ENCODE measurements at regions of chr2 and their contacts with region 1.

Region 1: GRCh38 chr2:55050133-55050994 is at the start of gene RTN4:
- DNase-seq: peak; percentile 99
- ATAC-seq: peak; percentile 85
- H3K4me3 ChIP-seq: peak within 1 kb of the TSS; percentile 67 to 95 (median 89)
- H3K4me3 Mint-ChIP-seq: peak within 1 kb of the TSS; percentile 100
- H3K27ac ChIP-seq: peak within 1 kb of the TSS; percentile 82 to 89
- H3K27ac Mint-ChIP-seq: peak within 1 kb of the TSS; percentile 100
- H3K4me1 ChIP-seq: peaks cover 48 to 52% of the 10 kb centered on the region in 2 donors
- H3K4me1 Mint-ChIP-seq: peaks cover 71% of the 10 kb centered on the region
- H3K27me3 ChIP-seq: no peaks in the 10 kb centered on the region
- H3K27me3 Mint-ChIP-seq: no peaks in the 10 kb centered on the region
- CTCF ChIP-seq: no peak
- total RNA-seq, gene RTN4: 63.3 and 65.9 TPM in 2 replicates

Region 2: DNA sequence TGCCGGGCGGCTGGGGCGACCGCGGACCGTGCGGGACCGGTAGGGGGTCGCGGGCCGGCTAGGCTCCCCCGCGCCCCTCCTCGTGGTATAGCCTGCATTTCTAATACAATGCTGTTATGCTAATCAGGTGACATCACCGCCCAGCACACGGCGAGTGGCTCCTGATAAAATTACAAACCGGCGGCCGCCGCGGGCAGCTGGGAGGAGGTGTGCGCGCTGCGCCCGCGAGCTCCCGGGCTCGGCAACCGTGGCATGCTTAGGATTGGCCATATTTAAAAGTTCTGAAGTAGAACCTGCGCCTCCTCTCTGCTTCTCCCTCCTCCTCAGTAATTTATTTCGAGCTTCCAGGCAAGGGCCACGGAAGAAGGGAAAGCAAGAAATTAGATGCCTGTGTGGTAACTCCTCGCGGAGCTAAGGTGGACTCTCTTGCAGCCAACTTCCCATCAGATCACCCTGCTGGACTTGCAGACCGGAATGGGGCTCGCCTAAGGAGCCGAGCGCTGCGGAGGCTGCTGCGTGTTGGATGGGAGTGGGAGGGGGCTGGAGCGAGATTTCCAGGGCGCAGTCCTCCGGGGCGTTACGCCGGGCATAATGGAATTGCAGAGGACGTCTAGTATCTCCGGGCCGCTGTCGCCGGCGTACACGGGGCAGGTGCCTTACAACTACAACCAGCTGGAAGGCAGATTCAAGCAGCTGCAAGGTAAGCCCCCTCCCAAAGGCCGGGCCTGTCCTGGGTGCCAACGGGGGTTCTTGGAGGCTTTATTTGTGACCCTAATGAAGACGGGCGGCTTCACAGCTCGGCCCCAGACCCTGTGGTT is 492.0 kb before region 1 on chr2:
- CTCF ChIA-PET with region 1: no interaction called
- POLR2A ChIA-PET with region 1: no interaction called
- intact Hi-C with region 1: loop called (anchors 5 kb)
- DNase-seq: peak; percentile 80
- ATAC-seq: peak; percentile 65
- H3K4me3 ChIP-seq: peak overlapping the region; percentile 91 to 99 (median 97)
- H3K4me3 Mint-ChIP-seq: peak overlapping the region; percentile 94
- H3K27ac ChIP-seq: peak overlapping the region; percentile 81 to 92
- H3K27ac Mint-ChIP-seq: peak overlapping the region; percentile 90
- H3K4me1 ChIP-seq: peaks cover 30 to 35% of the 10 kb centered on the region in 2 donors
- H3K4me1 Mint-ChIP-seq: peaks cover 54% of the 10 kb centered on the region
- H3K27me3 ChIP-seq: no peaks in the 10 kb centered on the region
- H3K27me3 Mint-ChIP-seq: no peaks in the 10 kb centered on the region
- CTCF ChIP-seq: no peak

Region 3: DNA sequence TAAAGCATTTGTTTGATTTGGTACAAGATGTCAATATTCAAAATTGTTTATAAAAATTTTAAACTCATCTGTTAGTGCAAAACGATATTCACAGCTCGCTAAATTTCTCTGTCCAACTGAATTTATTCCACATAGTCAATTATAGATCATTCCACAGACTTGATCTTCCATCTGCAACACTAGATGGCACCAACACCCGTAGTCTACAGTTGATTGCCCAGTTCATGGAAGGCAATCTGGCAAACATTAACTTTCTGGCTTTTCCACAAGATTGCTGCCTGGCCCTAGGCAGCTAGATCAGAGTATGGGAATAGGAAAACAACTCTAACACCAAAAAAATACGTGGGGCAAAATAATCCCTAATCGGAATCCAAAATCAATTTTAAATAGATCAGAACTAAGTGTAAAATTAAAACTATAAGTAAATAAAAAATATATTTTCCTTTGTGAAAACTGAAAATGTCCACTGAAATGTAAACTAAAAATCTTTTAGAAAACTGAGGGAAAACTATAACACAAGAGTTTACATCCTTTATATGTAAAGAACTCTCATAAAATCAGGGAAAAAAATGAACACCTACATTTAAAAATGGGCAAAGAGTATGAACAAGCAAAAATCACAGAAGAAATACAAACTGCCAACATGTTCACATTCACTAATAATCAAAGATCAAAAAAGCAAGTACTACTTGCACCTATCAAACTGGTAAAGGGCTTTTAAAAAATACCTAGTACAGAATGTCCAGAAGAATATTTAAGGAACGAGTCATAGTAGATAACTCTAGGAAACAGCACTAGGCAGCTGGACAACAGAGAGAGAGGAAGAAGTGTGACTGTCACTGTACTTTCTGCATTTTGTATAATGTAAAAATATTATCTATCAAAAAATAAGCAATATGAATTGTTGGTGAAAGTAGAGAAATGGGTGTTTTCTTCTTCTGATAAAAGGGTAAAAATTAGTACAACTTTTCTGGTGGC is 35.1 kb before region 1 on chr2:
- CTCF ChIA-PET with region 1: interaction called, 12 read pairs
- POLR2A ChIA-PET with region 1: interaction called, 5 read pairs
- intact Hi-C with region 1: loop called (anchors 2 kb)
- DNase-seq: peak; percentile 63
- ATAC-seq: peak; percentile 37
- H3K4me3 ChIP-seq: no peak overlapping the region
- H3K4me3 Mint-ChIP-seq: no peak overlapping the region
- H3K27ac ChIP-seq: no peak overlapping the region
- H3K27ac Mint-ChIP-seq: peak overlapping the region; percentile 22
- H3K4me1 ChIP-seq: peaks cover 21 to 41% of the 10 kb centered on the region in 2 donors
- H3K4me1 Mint-ChIP-seq: peaks cover 57% of the 10 kb centered on the region
- H3K27me3 ChIP-seq: no peaks in the 10 kb centered on the region
- H3K27me3 Mint-ChIP-seq: no peaks in the 10 kb centered on the region
- CTCF ChIP-seq: peak; percentile 64

Region 4: GRCh38 chr2:55038428-55038827 is 11.9 kb before region 1 on chr2:
- CTCF ChIA-PET with region 1: interaction called, 6 read pairs
- POLR2A ChIA-PET with region 1: interaction called, 4 read pairs
- intact Hi-C with region 1: loop called (anchors 1 kb)
- DNase-seq: no peak
- ATAC-seq: no peak
- H3K4me3 ChIP-seq: no peak overlapping the region
- H3K4me3 Mint-ChIP-seq: no peak overlapping the region
- H3K27ac ChIP-seq: no peak overlapping the region
- H3K27ac Mint-ChIP-seq: no peak overlapping the region
- H3K4me1 ChIP-seq: peaks cover under 1 to 7% of the 10 kb centered on the region in 2 donors
- H3K4me1 Mint-ChIP-seq: peaks cover 38% of the 10 kb centered on the region
- H3K27me3 ChIP-seq: no peaks in the 10 kb centered on the region
- H3K27me3 Mint-ChIP-seq: no peaks in the 10 kb centered on the region
- CTCF ChIP-seq: no peak

Region 5: DNA sequence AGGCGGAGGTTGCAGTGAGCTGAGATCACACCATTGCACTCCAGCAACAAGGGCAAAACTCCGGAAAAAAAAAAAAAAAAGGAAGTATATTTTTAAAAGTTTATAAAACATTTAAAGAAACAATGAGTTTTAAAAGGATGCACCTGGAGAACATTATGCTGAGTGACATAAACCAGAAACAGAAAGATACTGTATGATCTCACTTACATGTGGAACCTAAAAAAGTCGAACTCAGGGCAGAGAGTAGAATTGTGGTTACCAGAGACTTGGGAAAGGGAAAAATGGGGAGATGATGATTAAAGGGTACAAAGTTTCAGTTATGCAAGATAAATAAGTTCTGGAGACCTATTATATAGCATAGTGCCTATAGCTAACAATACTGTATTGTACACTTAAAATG is 52.7 kb after region 1 on chr2:
- CTCF ChIA-PET with region 1: no interaction called
- POLR2A ChIA-PET with region 1: no interaction called
- intact Hi-C with region 1: no loop called
- DNase-seq: no peak
- ATAC-seq: no peak
- H3K4me3 ChIP-seq: no peak overlapping the region
- H3K4me3 Mint-ChIP-seq: no peak overlapping the region
- H3K27ac ChIP-seq: no peak overlapping the region
- H3K27ac Mint-ChIP-seq: no peak overlapping the region
- H3K4me1 ChIP-seq: no peaks in the 10 kb centered on the region
- H3K4me1 Mint-ChIP-seq: peaks cover 2% of the 10 kb centered on the region
- H3K27me3 ChIP-seq: no peaks in the 10 kb centered on the region
- H3K27me3 Mint-ChIP-seq: no peaks in the 10 kb centered on the region
- CTCF ChIP-seq: no peak

Region 6: GRCh38 chr2:55150834-55151233 is 100.5 kb after region 1 on chr2:
- CTCF ChIA-PET with region 1: interaction called, 5 read pairs
- POLR2A ChIA-PET with region 1: interaction called, 4 read pairs
- intact Hi-C with region 1: loop called (anchors 5 kb)
- DNase-seq: peak; percentile 81
- ATAC-seq: peak; percentile 94
- H3K4me3 ChIP-seq: no peak overlapping the region
- H3K4me3 Mint-ChIP-seq: peak overlapping the region; percentile 10
- H3K27ac ChIP-seq: no peak overlapping the region
- H3K27ac Mint-ChIP-seq: peak overlapping the region; percentile 91
- H3K4me1 ChIP-seq: peaks cover 36 to 53% of the 10 kb centered on the region in 2 donors
- H3K4me1 Mint-ChIP-seq: peaks cover 49% of the 10 kb centered on the region
- H3K27me3 ChIP-seq: no peaks in the 10 kb centered on the region
- H3K27me3 Mint-ChIP-seq: no peaks in the 10 kb centered on the region
- CTCF ChIP-seq: no peak

Region 7: DNA sequence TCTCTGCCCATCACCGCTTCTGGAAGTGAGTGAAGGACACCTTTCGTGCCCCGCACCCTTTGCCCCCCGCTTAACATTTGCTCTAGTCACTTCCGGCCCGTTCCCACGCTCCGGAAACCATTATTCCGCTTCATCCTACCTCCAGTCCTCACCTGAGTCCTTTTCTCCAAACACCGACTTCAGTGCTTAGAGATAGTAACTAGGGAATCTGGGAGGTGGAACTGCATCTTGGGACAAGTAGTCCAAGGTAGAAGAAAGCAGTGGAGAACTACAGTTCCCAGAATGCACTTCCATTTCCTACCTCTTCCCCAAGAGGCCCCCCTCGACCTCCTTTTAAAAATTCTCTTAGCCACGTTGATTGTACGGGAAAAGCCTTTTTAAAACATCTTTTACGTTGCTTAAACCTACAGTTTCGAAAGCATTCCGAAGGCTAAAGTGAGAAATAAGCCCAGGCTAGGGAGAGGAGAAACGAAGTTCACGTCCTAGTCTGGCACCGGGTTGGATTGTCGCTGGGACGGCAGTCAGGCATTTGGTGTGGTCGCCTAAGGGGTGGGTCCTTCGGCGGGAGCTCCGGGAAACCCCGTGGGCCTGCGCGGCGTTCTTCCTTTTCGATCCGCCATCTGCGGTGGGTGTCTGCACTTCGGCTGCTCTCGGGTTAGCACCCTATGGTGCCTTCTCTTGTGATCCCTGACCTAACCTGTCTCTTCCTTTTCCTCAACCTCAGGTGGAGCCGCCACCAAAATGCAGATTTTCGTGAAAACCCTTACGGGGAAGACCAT is 181.9 kb after region 1 on chr2 and contains the starts of genes CLHC1 and RPS27A:
- CTCF ChIA-PET with region 1: no interaction called
- POLR2A ChIA-PET with region 1: interaction called, 9 read pairs
- intact Hi-C with region 1: loop called (anchors 1 kb)
- DNase-seq: peak; percentile 97
- ATAC-seq: peak; percentile 87
- H3K4me3 ChIP-seq: peak within 1 kb of the TSS; percentile 72 to 98 (median 94)
- H3K4me3 Mint-ChIP-seq: peak within 1 kb of the TSS; percentile 94
- H3K27ac ChIP-seq: peak within 1 kb of the TSS; percentile 95 to 98
- H3K27ac Mint-ChIP-seq: peak within 1 kb of the TSS; percentile 99
- H3K4me1 ChIP-seq: peaks cover 28 to 39% of the 10 kb centered on the region in 2 donors
- H3K4me1 Mint-ChIP-seq: peaks cover 54% of the 10 kb centered on the region
- H3K27me3 ChIP-seq: no peaks in the 10 kb centered on the region
- H3K27me3 Mint-ChIP-seq: no peaks in the 10 kb centered on the region
- CTCF ChIP-seq: no peak
- total RNA-seq, gene CLHC1: 12.0 and 12.8 TPM in 2 replicates
- total RNA-seq, gene RPS27A: 1,561 and 1,678 TPM in 2 replicates

Region 8: GRCh38 chr2:55419679-55420438 is 369.5 kb after region 1 on chr2 and contains the start of gene CCDC88A:
- CTCF ChIA-PET with region 1: no interaction called
- POLR2A ChIA-PET with region 1: no interaction called
- intact Hi-C with region 1: loop called (anchors 5 kb)
- DNase-seq: peak; percentile 95
- ATAC-seq: peak; percentile 85
- H3K4me3 ChIP-seq: peak within 1 kb of the TSS; percentile 65 to 91 (median 82)
- H3K4me3 Mint-ChIP-seq: peak within 1 kb of the TSS; percentile 95
- H3K27ac ChIP-seq: peak within 1 kb of the TSS; percentile 68 to 73
- H3K27ac Mint-ChIP-seq: peak within 1 kb of the TSS; percentile 95
- H3K4me1 ChIP-seq: peaks cover 20 to 25% of the 10 kb centered on the region in 2 donors
- H3K4me1 Mint-ChIP-seq: peaks cover 38% of the 10 kb centered on the region
- H3K27me3 ChIP-seq: peaks cover 0 to 4% (median 0%) of the 10 kb centered on the region in 4 experiments
- H3K27me3 Mint-ChIP-seq: no peaks in the 10 kb centered on the region
- CTCF ChIP-seq: no peak
- total RNA-seq, gene CCDC88A: 26.0 and 27.6 TPM in 2 replicates